Dendritic cell treated with granulocyte-macrophage colony-stimulating factor and Interleukin-4, amounts not matched to agents 40 ng/mL and 50 ng/mL, for 4 days (primary cell): ENCODE measurements at regions of chr5 and their contacts with region 1.

Region 1: DNA sequence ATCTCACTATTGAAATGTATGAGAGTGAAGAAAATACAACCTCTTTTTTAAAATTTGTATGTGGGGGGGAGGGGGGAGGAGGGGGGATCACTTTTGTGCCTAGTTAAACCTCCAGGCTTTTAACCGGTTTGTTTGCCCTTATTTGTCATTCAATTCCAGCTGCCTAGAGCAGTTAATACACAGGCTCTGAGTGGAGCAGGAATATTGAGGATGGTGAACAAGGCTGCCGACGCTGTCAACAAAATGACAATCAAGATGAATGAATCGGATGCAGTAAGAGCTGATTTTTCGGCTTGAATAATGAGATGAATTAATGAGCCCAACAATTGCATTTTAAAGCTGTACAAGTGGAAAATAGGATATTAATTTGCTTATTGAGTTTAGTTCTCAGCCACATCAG is 28.7 kb upstream of the SNX24 start:
- H3K4me3 Mint-ChIP-seq: no peak overlapping the region
- H3K27ac Mint-ChIP-seq: no peak overlapping the region
- H3K4me1 Mint-ChIP-seq: no peaks in the 10 kb centered on the region
- H3K27me3 Mint-ChIP-seq: no peaks in the 10 kb centered on the region

Region 2: GRCh38 chr5:123398058-123398733 is 581.4 kb after region 1 on chr5:
- intact Hi-C with region 1: loop called (anchors 10 kb)
- H3K4me3 Mint-ChIP-seq: no peak overlapping the region
- H3K27ac Mint-ChIP-seq: no peak overlapping the region
- H3K4me1 Mint-ChIP-seq: no peaks in the 10 kb centered on the region
- H3K27me3 Mint-ChIP-seq: no peaks in the 10 kb centered on the region